ENCODE measurements at regions of chr12 and their contacts with region 1.

Region 1: GRCh38 chr12:6978609-6979011 is 7.9 kb downstream of the EMG1 start:
- DNase-seq: no peak
- H3K4me3 ChIP-seq: no peak overlapping the region
- H3K27ac ChIP-seq: no peak overlapping the region
- H3K4me1 ChIP-seq: peaks cover 0 to 6% (median under 1%) of the 10 kb centered on the region in 4 experiments; a peak in 2 of 7 replicates
- H3K27me3 ChIP-seq: no peaks in the 10 kb centered on the region
- CTCF ChIP-seq: no peak
- EP300 ChIP-seq: no peak
- POLR2A ChIP-seq: peak in 1 of 2 experiments; percentile 18; a peak in 2 of 3 replicates
- RAD21 ChIP-seq: no peak

Region 2: DNA sequence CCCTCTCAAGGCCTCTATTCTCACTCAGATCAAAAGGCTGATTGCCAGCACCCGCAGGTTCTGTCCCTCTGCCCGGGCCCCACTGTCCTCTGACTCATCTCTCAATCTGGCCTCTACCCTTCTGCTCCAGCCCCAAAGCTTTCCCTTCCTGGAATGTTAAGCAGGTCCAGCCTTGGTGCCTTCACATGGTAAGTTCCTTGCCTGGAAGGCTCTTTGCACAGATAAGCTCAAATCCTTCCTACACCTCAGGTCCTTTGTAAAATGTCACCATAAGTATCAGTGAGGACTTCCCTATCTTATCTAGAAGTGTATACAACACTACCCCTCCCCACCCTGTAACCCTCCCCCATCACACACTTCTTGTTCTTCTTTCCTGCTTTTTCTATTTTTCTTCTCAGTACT is 17.4 kb after region 1 on chr12:
- CTCF ChIA-PET with region 1: interaction called, 4 read pairs
- POLR2A ChIA-PET with region 1: interaction called, 42 read pairs
- DNase-seq: no peak
- H3K4me3 ChIP-seq: no peak overlapping the region
- H3K27ac ChIP-seq: no peak overlapping the region
- H3K4me1 ChIP-seq: no peaks in the 10 kb centered on the region
- H3K27me3 ChIP-seq: no peaks in the 10 kb centered on the region
- CTCF ChIP-seq: no peak
- EP300 ChIP-seq: no peak
- POLR2A ChIP-seq: no peak
- RAD21 ChIP-seq: no peak

Region 3: DNA sequence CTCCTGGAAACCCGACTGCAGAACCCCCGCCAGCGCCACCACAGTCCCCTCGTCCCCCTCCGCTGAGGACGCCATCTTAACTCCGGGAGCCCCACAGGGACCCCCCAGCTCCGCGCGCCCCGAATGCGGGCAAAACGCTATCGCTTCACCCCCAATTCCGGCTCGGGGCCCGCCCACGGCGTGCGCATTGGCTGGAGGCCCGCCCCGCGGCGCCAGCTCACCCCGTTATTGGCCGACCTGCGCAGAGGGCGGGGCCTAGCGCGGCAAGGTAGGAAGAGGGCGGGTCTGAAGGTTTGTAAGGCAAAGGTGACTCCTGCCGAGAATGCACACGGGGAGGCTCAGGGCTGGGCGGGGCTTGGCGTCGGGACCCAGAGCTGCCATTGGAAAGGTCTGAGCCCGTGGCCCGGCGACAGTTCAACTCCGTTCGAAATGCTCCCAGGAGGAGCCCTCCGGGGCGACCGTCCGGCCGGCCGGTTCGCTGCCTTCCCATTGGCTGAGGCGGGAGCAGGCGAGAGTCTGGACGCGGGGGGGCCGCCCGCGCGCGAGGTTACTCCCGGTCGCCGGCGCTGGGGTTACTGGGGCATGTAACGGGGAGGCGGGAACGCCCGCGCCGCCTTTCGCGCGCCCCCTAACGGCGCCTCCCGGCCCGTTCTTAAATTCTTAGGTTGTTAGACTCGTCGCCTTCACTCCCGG is 39.9 kb after region 1 on chr12 and contains the start of gene LPCAT3:
- CTCF ChIA-PET with region 1: interaction called, 10 read pairs
- POLR2A ChIA-PET with region 1: interaction called, 9 read pairs
- DNase-seq: peak; percentile 86 to 98
- H3K4me3 ChIP-seq: peak within 1 kb of the TSS; percentile 74 to 91 (median 80)
- H3K27ac ChIP-seq: peak within 1 kb of the TSS; percentile 76; the same call in 1 of the 2 replicates
- H3K4me1 ChIP-seq: peaks cover 0 to 3% (median under 1%) of the 10 kb centered on the region in 4 experiments; a peak in 2 of 7 replicates
- H3K27me3 ChIP-seq: no peaks in the 10 kb centered on the region
- CTCF ChIP-seq: peak; percentile 73 to 84 (median 77)
- EP300 ChIP-seq: peak in 1 of 2 experiments; percentile 66; a peak in 1 of 3 replicates
- POLR2A ChIP-seq: peak; percentile 13 to 37; a peak in 2 of 3 replicates
- RAD21 ChIP-seq: peak; percentile 53 to 64
- total RNA-seq, gene LPCAT3: 55.2 and 55.8 TPM in 2 replicates